Dendritic cell treated with granulocyte-macrophage colony-stimulating factor and Interleukin-4, amounts not matched to agents 40 ng/mL and 50 ng/mL, for 4 days (primary cell): ENCODE measurements at regions of chr16 and their contacts with region 1.

Region 1: GRCh38 chr16:180938-181667 is 844 bp downstream of the HBQ1 start:
- H3K4me3 Mint-ChIP-seq: peak overlapping the region; percentile 46
- H3K27ac Mint-ChIP-seq: no peak overlapping the region
- H3K4me1 Mint-ChIP-seq: no peaks in the 10 kb centered on the region
- H3K27me3 Mint-ChIP-seq: peaks cover 42% of the 10 kb centered on the region

Region 2: DNA sequence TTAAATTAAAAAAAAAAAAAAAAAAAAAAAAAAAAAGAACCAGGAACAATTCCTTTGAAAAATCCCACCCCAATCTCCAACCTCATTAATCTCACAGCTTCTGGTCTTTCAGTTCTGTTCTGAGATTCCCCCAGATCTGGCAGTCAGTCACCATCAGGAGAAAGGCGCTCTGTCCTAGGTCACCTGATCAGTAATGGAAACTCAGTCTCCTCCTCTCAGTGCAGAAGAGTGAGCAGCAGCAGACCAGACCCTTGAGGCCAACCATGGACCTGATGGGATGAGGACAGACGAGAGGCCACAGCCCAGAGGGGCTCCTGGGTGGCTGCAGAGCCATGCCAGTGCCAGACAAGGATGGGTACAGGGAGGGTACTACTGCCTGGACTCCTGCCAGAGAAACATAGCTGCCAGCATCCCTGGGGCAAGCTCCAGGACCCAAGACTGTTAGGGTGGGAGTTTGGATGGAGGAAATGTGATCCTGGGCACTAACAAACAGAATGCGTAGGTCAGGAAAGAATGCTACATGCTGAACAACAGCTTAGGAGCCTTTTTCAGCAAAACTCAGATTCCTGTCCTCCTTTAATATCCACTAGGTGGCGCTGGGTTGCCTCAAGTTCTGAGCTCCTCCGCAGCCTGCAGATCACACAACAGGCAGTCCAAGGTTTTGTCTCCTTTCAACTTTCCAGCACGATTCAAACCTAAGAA is 74.3 kb before region 1 on chr16:
- intact Hi-C with region 1: loop called (anchors 1 kb)
- H3K4me3 Mint-ChIP-seq: no peak overlapping the region
- H3K27ac Mint-ChIP-seq: no peak overlapping the region
- H3K4me1 Mint-ChIP-seq: no peaks in the 10 kb centered on the region
- H3K27me3 Mint-ChIP-seq: no peaks in the 10 kb centered on the region

Region 3: DNA sequence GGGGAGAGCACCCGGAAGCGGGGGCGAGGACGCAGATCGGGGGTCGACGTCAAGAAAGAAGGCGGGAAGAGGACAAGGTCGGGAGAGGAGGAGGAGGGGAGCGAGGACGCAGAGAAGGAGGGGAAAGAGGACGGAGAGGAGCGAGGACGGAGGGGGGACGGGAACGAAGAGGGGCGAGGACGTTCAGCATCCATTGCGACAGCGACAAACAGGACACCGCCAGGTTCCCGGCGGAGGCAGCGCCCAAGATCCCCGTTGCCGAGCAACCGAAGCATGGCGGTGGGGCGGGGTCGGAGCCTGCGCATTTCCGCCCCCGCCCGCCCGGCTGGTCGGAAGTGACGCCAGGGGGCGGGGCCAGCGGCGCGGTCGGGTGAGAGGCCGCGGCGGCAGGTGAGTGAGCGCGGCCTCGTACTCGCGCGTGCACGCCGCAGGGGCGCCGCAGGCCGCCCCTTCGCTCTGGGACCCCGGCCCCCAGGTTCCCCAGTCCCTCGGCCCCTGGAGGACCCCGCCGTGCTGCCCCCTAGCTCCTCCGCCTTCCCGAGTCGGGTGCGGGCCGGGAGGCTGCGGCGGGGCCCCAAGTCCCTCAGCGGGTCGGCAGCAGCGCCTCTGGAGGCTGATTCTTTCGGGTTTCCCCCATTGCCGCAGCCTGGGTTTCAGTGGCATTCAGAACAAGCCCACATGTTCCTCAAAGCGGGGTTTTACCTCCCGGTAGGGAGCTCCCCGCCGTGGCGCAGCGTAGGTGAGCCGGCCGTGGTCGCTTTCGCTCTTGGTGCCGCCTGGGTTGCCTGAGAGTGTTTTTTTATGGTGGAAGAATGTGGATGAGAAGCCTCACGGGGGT is 53.6 kb after region 1 on chr16 and contains the start of gene FAM234A:
- intact Hi-C with region 1: no loop called
- H3K4me3 Mint-ChIP-seq: peak within 1 kb of the TSS; percentile 93
- H3K27ac Mint-ChIP-seq: peak within 1 kb of the TSS; percentile 100
- H3K4me1 Mint-ChIP-seq: peaks cover 10% of the 10 kb centered on the region
- H3K27me3 Mint-ChIP-seq: no peaks in the 10 kb centered on the region